ENCODE measurements at regions of chr14 and their contacts with region 1.

Region 1: GRCh38 chr14:75249251-75249957 is 29.2 kb upstream of the FOS start:
- DNase-seq: peak; percentile 86
- H3K4me3 Mint-ChIP-seq: peak overlapping the region; percentile 48
- H3K27ac Mint-ChIP-seq: peak overlapping the region; percentile 85
- H3K4me1 Mint-ChIP-seq: peaks cover 54% of the 10 kb centered on the region
- H3K27me3 Mint-ChIP-seq: peaks cover 39% of the 10 kb centered on the region

Region 2: GRCh38 chr14:74841230-74842207 is 407.9 kb before region 1 on chr14:
- intact Hi-C with region 1: loop called (anchors 1 kb)
- DNase-seq: peak; percentile 30
- H3K4me3 Mint-ChIP-seq: peak overlapping the region; percentile 72
- H3K27ac Mint-ChIP-seq: peak overlapping the region; percentile 92
- H3K4me1 Mint-ChIP-seq: peaks cover 60% of the 10 kb centered on the region
- H3K27me3 Mint-ChIP-seq: no peaks in the 10 kb centered on the region

Region 3: DNA sequence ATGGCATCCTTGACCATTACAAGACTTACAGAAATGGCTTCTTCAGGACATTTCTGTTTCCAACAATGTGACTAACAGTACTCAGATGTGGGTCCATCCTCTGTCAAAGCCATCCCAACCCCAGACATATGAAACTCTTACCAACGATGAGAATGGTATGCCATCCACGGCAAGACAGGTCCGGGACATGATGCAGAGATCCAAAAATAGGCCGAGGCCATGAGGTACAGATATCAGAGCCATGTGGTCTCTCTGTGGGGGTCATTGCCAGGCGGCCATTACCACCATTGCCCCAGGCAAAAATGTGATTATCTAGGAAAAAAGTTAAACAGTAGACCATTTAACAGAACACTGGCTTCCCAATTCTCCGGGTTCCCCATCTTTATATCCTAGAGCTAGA is 152.4 kb before region 1 on chr14:
- intact Hi-C with region 1: no loop called
- DNase-seq: no peak
- H3K4me3 Mint-ChIP-seq: no peak overlapping the region
- H3K27ac Mint-ChIP-seq: no peak overlapping the region
- H3K4me1 Mint-ChIP-seq: no peaks in the 10 kb centered on the region
- H3K27me3 Mint-ChIP-seq: no peaks in the 10 kb centered on the region

Region 4: DNA sequence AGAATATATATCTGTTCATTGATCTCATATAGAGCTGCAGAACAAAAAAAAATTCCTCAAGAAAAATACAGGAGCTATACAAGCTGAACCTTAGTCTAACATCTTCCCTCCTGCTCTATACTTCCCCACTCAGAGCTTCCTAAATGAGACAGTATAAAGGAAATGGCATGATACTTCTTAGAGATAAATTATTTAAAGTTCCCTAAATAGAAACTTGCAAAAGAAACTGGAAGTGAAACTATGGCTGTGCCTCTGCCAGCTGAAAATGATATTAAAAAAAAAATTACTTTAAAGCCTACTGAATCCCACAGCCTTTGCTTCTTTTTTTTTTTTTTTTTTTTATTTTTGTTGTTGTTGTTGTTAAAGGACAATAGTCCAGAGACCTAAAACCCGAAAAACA is 110.9 kb before region 1 on chr14:
- intact Hi-C with region 1: loop called (anchors 1 kb)
- DNase-seq: no peak
- H3K4me3 Mint-ChIP-seq: no peak overlapping the region
- H3K27ac Mint-ChIP-seq: peak overlapping the region; percentile 22
- H3K4me1 Mint-ChIP-seq: peaks cover 43% of the 10 kb centered on the region
- H3K27me3 Mint-ChIP-seq: no peaks in the 10 kb centered on the region

Region 5: GRCh38 chr14:75205591-75205990 is 43.8 kb before region 1 on chr14:
- intact Hi-C with region 1: loop called (anchors 2 kb)
- DNase-seq: peak; percentile 3
- H3K4me3 Mint-ChIP-seq: no peak overlapping the region
- H3K27ac Mint-ChIP-seq: peak overlapping the region; percentile 67
- H3K4me1 Mint-ChIP-seq: peaks cover 30% of the 10 kb centered on the region
- H3K27me3 Mint-ChIP-seq: peaks cover 4% of the 10 kb centered on the region

Region 6: DNA sequence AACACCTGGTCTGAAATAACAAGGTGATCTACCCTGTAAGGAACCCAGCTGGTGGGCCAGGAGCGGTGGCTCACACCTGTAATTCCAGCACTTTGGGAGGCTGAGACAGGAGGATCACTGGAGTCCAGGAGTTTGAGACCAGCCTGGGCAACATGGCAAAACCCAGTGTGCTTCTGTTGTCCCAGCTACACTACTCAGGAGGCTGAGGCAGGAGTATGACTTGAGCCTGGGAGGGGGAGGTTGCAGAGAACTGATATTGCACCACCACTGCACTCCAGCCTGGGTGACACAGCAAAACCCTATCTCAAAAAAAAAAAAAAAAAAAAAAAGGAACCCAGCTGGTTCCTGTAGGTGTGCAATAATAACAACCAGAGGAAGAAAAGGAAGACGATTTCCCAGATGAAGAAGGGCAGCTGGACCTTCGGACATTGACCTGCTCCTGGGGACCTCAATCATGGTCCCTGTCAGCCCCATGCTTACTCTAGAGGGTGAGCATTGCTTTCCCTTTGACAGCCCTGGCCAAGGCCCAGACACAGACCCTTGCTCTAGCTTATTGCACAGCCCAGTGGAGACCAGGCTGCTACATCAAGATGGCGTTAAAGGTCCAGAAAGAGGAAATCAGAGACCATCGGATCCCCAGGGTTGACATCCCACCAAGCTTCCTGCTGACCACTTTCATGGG is 34.6 kb after region 1 on chr14:
- intact Hi-C with region 1: no loop called
- DNase-seq: no peak
- H3K4me3 Mint-ChIP-seq: no peak overlapping the region
- H3K27ac Mint-ChIP-seq: no peak overlapping the region
- H3K4me1 Mint-ChIP-seq: peaks cover 24% of the 10 kb centered on the region
- H3K27me3 Mint-ChIP-seq: peaks cover 40% of the 10 kb centered on the region

Region 7: DNA sequence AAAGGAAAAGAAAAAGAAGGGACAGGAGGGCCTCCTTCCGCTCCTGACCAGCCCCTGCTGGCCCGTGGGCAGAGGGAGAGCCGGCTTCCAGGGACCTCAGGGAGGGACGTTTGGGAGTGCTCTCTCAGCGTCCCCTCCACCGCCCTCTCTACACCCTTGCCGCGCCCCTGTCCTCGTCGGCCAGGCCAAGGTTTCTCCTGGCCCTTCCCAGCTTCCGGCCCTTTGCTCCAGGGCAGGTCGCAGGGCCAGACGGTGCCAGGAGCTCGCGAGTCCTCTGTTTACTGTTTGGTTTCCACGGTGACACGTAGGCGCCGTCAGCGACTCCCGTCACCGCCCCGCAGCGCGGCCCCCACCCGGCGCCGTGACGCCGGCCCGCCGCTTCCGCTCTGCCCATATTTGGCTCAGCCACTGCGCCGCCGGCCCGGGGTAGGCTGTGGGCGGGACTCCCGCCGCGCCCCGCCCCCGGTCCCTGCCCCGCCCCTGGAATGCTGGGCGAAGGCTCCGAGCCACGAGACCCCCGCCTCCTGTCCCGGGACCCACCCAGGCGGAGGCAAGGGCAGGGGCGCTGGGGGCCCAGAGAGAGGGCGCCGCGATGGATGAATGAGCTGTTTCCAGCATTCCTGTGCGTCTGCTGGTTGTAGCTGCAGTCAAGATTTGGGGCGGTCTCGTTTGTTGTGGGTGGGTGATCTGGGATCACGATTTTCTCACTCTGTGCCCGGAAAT is 44.7 kb after region 1 on chr14:
- intact Hi-C with region 1: loop called (anchors 1 kb)
- DNase-seq: peak; percentile 92
- H3K4me3 Mint-ChIP-seq: peak overlapping the region; percentile 72
- H3K27ac Mint-ChIP-seq: peak overlapping the region; percentile 95
- H3K4me1 Mint-ChIP-seq: peaks cover 22% of the 10 kb centered on the region
- H3K27me3 Mint-ChIP-seq: peaks cover 26% of the 10 kb centered on the region

Region 8: DNA sequence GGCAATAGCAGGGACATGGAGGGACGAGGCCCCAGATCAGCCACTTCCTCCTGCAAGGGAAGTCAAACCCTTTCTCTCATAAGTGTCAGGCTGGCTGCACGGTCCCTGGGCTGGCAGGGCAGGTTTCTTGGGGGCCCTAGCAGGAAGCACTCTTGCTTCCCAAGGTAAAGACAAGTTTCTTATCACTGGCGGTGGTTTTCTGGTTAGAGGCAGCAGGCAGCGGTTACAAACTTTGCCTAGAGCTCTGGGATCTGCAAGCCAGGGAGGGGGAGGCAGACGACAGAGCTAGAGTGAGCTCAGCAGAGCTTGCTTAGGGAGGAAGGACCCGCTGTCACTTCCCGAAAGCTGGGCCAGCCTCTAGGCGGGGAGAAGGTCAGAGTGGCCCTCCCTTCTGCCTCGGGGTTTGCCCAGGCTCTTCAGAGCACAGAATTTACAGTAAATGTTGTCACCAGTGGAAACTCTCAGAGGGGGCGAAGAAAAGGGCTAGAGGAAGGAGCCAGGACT is 293.2 kb after region 1 on chr14:
- intact Hi-C with region 1: loop called (anchors 1 kb)
- DNase-seq: peak; percentile 83
- H3K4me3 Mint-ChIP-seq: peak overlapping the region; percentile 64
- H3K27ac Mint-ChIP-seq: peak overlapping the region; percentile 95
- H3K4me1 Mint-ChIP-seq: peaks cover 77% of the 10 kb centered on the region
- H3K27me3 Mint-ChIP-seq: no peaks in the 10 kb centered on the region

Region 9: DNA sequence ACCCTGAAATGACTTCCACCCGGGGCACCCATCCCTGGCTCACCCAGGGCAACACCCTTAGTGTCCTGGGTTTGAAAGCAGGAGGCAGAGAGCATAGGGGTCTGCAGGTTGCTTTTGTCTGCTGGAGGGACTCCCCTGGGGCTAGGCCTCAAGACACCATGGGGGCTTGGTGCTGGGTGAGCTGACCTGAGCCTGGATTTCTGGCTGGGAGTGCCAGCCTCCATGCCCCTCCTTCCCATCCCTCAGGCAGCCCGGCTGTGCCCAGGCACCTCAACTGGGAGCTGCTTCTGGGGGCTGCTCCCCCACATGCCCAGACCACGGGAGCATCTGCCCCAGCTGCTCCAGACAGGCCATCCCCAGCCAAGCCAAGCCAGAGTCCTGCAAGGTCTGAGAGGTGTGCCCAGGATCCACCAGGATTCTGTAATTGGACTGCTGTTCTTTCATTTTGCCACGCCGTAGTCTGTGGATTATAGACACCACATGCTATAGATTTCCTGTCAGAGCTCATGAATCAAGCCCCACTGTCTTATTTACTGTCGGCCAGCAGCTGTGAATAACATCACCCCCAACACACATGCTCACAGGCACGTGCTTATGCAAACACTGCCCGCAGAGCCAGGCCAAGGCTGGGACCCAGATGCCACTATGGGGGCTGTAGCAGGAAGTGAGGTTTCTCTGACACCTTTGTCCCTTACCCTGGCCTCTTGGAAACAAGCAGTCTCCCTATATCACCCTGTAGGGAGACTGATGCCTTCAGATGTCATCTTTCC is 1097.2 kb after region 1 on chr14:
- intact Hi-C with region 1: no loop called
- DNase-seq: no peak
- H3K4me3 Mint-ChIP-seq: no peak overlapping the region
- H3K27ac Mint-ChIP-seq: no peak overlapping the region
- H3K4me1 Mint-ChIP-seq: no peaks in the 10 kb centered on the region
- H3K27me3 Mint-ChIP-seq: no peaks in the 10 kb centered on the region